Transverse colon (tissue), 4 donors: ENCODE measurements at regions of chr18 and their contacts with region 1.

Region 1: GRCh38 chr18:55289775-55290174 is 298.2 kb downstream of the TCF4 start:
- DNase-seq: no peak
- H3K4me3 ChIP-seq: no peak overlapping the region
- H3K27ac ChIP-seq: no peak overlapping the region
- H3K4me1 ChIP-seq: peaks cover 0 to 11% (median 2%) of the 10 kb centered on the region in 4 donors
- H3K27me3 ChIP-seq: no peaks in the 10 kb centered on the region
- CTCF ChIP-seq: no peak
- EP300 ChIP-seq: no peak
- POLR2A ChIP-seq: no peak

Region 2: GRCh38 chr18:54801374-54801773 is 488.4 kb before region 1 on chr18:
- in situ Hi-C with region 1: no loop called
- intact Hi-C with region 1: loop called (anchors 5 kb)
- DNase-seq: no peak
- H3K4me3 ChIP-seq: no peak overlapping the region
- H3K27ac ChIP-seq: no peak overlapping the region
- H3K4me1 ChIP-seq: no peaks in the 10 kb centered on the region
- H3K27me3 ChIP-seq: no peaks in the 10 kb centered on the region
- CTCF ChIP-seq: no peak
- EP300 ChIP-seq: no peak
- POLR2A ChIP-seq: no peak